ENCODE measurements at regions of chr12 and their contacts with region 1.

Region 1: GRCh38 chr12:122051231-122051876 is 27.2 kb upstream of the MLXIP start:
- DNase-seq: no peak
- ATAC-seq: no peak
- H3K4me3 ChIP-seq: no peak overlapping the region
- H3K4me3 Mint-ChIP-seq: no peak overlapping the region
- H3K27ac ChIP-seq: no peak overlapping the region
- H3K27ac Mint-ChIP-seq: no peak overlapping the region
- H3K4me1 ChIP-seq: peaks cover 9% of the 10 kb centered on the region
- H3K4me1 Mint-ChIP-seq: peaks cover 4% of the 10 kb centered on the region
- H3K27me3 ChIP-seq: no peaks in the 10 kb centered on the region
- H3K27me3 Mint-ChIP-seq: no peaks in the 10 kb centered on the region
- CTCF ChIP-seq: no peak

Region 2: GRCh38 chr12:120955232-120955631 is 1096.1 kb before region 1 on chr12:
- CTCF ChIA-PET with region 1: no interaction called
- POLR2A ChIA-PET with region 1: no interaction called
- intact Hi-C with region 1: no loop called
- DNase-seq: no peak
- ATAC-seq: no peak
- H3K4me3 ChIP-seq: no peak overlapping the region
- H3K4me3 Mint-ChIP-seq: no peak overlapping the region
- H3K27ac ChIP-seq: no peak overlapping the region
- H3K27ac Mint-ChIP-seq: no peak overlapping the region
- H3K4me1 ChIP-seq: peaks cover 14% of the 10 kb centered on the region
- H3K4me1 Mint-ChIP-seq: peaks cover 13% of the 10 kb centered on the region
- H3K27me3 ChIP-seq: no peaks in the 10 kb centered on the region
- H3K27me3 Mint-ChIP-seq: no peaks in the 10 kb centered on the region
- CTCF ChIP-seq: no peak

Region 3: DNA sequence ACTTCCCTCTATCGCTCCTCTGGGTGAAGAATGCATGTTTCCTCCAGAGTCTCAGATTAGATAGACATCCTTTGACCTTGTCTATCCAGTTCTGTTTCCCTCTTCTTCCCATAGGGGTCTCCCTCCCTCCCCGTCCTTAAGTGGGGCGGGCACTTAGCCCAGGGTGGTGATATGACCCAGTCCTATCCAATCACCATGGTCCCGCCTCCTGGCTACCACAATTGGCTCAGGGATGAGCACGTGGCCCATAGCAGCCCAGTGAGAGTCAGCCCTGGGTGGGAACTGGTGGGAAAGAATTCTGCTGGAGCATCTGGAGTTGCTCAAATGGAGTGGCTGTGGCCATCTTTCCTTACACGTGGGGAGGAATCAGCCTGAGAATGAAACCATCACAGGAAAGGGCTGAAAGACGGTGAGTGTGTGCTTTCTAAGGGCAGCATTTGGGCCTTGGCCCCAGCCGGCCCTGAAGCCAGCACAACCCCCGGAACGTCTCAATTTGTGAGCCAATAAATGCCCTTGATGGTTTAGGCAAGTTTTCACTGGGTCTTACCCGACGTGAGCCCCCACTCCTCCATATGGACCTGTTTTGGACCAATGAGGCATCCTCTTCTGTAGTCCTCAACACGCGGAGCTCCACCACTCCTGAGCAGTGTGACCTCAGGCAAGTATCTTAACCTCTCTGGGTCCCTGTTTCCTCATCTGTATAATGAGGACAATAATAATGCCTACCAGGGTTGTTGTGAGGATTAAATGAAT is 12.8 kb after region 1 on chr12:
- CTCF ChIA-PET with region 1: interaction called, 11 read pairs
- POLR2A ChIA-PET with region 1: interaction called, 3 read pairs
- intact Hi-C with region 1: no loop called
- DNase-seq: peak in 5 of 14 experiments; percentile 22 to 67 (median 50)
- ATAC-seq: peak; percentile 84
- H3K4me3 ChIP-seq: no peak overlapping the region
- H3K4me3 Mint-ChIP-seq: no peak overlapping the region
- H3K27ac ChIP-seq: no peak overlapping the region
- H3K27ac Mint-ChIP-seq: no peak overlapping the region
- H3K4me1 ChIP-seq: peaks cover 19% of the 10 kb centered on the region
- H3K4me1 Mint-ChIP-seq: peaks cover 17% of the 10 kb centered on the region
- H3K27me3 ChIP-seq: no peaks in the 10 kb centered on the region
- H3K27me3 Mint-ChIP-seq: no peaks in the 10 kb centered on the region
- CTCF ChIP-seq: no peak

Region 4: DNA sequence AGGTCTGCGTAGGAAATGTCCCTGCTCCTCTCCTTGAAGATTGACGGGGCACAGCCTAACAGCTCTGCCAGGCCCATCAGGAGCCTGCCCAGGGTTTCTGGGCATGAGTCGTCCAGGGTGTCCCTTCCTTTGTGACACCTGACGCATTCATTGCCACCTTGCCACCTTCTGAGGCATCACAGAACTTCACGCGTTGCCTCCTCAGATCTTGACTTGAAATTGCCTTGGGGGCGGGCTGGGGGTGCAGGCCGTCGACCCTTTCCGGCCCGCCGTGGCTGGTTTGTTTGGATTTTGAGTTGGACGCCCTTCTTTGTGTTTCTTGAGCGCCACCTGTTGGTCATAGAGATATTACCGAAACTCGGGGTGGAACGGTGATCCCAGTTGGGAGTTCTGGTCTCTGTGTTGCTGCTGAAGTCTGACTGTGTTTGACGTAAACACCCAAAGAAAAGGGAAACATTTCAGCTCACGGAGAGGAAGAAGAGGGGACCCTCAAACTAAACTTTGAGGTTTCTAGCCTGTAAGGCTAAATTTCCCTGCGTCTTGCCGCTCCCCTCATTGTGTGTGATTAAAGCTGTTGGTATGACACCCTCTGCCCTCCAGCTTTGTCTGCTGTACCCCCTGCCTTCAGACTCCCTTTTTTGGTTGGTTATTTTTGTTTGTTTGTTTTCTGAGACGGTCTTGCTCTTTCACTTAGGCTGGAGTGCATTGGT is 71.9 kb after region 1 on chr12:
- CTCF ChIA-PET with region 1: interaction called, 43 read pairs
- POLR2A ChIA-PET with region 1: interaction called, 3 read pairs
- intact Hi-C with region 1: loop called (anchors 1 kb)
- DNase-seq: peak; percentile 53 to 84 (median 66)
- ATAC-seq: peak; percentile 79
- H3K4me3 ChIP-seq: no peak overlapping the region
- H3K4me3 Mint-ChIP-seq: peak overlapping the region; percentile 68
- H3K27ac ChIP-seq: no peak overlapping the region
- H3K27ac Mint-ChIP-seq: peak overlapping the region; percentile 69
- H3K4me1 ChIP-seq: peaks cover 19% of the 10 kb centered on the region
- H3K4me1 Mint-ChIP-seq: peaks cover 39% of the 10 kb centered on the region
- H3K27me3 ChIP-seq: no peaks in the 10 kb centered on the region
- H3K27me3 Mint-ChIP-seq: no peaks in the 10 kb centered on the region
- CTCF ChIP-seq: peak; percentile 95

Region 5: DNA sequence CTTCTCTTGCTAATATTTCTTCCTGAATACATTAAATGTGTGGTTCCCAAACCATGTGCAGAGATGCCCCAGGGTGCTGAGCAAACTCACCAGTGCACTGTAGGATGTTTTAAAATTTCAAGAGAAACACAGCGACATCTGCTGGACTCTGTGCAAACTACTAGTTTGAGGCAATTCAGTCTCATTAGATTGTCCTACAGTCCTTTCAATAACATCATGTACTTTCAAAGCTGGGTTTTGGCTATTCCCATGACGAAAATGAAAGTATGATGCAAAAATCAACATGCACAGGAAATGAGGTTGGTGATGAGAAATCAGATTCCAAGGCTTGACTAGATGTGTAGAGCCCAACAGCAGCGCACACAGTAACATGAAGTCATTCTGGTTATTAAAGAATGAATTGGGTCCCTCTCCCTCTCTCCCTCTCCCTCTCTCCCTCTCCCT is 304.9 kb after region 1 on chr12:
- CTCF ChIA-PET with region 1: interaction called, 3 read pairs
- POLR2A ChIA-PET with region 1: no interaction called
- intact Hi-C with region 1: loop called in 1 of 2 experiments (anchors 5 kb)
- DNase-seq: peak; percentile 8 to 72 (median 44)
- ATAC-seq: peak; percentile 91
- H3K4me3 ChIP-seq: no peak overlapping the region
- H3K4me3 Mint-ChIP-seq: no peak overlapping the region
- H3K27ac ChIP-seq: no peak overlapping the region
- H3K27ac Mint-ChIP-seq: no peak overlapping the region
- H3K4me1 ChIP-seq: no peaks in the 10 kb centered on the region
- H3K4me1 Mint-ChIP-seq: peaks cover 10% of the 10 kb centered on the region
- H3K27me3 ChIP-seq: no peaks in the 10 kb centered on the region
- H3K27me3 Mint-ChIP-seq: no peaks in the 10 kb centered on the region
- CTCF ChIP-seq: peak; percentile 95

Region 6: DNA sequence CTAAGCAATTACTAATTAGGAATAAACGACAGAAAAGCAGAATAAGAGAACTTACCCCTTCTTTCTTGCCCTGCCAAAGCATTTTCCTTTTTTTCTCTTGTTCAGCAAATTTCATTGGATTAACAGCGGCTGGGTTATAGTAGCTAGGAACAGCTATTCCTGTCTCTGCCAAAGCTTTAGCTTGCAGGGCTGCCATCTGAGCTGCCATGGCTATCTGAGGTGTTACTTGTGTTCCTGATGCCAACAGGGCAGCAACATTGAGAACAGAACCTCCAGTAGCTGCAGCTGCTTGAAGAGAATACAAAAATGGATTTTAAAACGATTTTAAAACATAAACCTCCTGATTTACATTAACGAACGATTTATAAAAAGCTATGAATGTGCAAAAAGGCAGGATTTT is 456.8 kb after region 1 on chr12:
- CTCF ChIA-PET with region 1: no interaction called
- POLR2A ChIA-PET with region 1: no interaction called
- intact Hi-C with region 1: no loop called
- DNase-seq: no peak
- ATAC-seq: no peak
- H3K4me3 ChIP-seq: no peak overlapping the region
- H3K4me3 Mint-ChIP-seq: no peak overlapping the region
- H3K27ac ChIP-seq: no peak overlapping the region
- H3K27ac Mint-ChIP-seq: no peak overlapping the region
- H3K4me1 ChIP-seq: no peaks in the 10 kb centered on the region
- H3K4me1 Mint-ChIP-seq: peaks cover 5% of the 10 kb centered on the region
- H3K27me3 ChIP-seq: no peaks in the 10 kb centered on the region
- H3K27me3 Mint-ChIP-seq: no peaks in the 10 kb centered on the region
- CTCF ChIP-seq: no peak

Measured in CD4-positive, alpha-beta T cell (primary cell).